ENCODE measurements at regions of chr9 and their contacts with region 1.

Region 1: DNA sequence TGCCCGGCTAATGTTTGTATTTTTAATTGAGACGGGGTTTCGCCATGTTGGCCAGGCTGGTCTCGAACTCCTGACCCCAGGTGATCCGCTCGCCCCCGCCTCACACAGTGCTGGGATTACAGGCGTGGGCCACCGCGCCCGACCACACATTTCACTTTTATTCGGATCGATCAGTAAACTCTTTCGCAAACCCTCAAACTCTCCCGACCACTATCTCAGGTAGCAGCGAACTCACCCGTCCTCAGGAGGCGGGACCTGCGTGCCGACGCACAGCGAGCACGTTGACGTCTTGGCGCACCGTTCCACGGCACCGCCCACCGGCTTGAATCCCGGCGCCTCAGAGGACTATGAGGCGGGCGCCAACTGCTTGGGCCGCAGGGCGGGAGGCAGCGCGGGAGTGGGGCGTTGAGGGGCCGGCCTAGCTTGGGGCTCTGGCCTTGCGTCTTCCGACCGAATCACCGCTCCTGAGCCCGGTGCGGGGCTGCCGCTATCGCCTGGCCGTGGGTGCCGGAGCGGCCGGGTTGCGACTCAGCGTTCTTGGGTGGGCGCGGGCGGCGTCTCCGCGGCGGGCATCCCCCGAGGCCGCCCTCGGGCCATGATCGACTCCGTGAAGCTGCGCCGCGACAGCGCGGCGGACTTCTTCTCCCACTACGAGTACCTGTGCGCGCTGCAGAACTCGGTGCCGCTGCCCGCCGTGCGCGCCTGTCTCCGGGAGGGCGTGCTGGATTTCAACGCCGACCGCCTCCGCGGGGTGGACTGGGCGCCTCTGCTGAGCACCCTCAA is at the start of gene CEP78:
- DNase-seq: peak; percentile 97
- H3K27ac ChIP-seq: peak within 1 kb of the TSS; percentile 84
- CTCF ChIP-seq: no peak

Region 2: DNA sequence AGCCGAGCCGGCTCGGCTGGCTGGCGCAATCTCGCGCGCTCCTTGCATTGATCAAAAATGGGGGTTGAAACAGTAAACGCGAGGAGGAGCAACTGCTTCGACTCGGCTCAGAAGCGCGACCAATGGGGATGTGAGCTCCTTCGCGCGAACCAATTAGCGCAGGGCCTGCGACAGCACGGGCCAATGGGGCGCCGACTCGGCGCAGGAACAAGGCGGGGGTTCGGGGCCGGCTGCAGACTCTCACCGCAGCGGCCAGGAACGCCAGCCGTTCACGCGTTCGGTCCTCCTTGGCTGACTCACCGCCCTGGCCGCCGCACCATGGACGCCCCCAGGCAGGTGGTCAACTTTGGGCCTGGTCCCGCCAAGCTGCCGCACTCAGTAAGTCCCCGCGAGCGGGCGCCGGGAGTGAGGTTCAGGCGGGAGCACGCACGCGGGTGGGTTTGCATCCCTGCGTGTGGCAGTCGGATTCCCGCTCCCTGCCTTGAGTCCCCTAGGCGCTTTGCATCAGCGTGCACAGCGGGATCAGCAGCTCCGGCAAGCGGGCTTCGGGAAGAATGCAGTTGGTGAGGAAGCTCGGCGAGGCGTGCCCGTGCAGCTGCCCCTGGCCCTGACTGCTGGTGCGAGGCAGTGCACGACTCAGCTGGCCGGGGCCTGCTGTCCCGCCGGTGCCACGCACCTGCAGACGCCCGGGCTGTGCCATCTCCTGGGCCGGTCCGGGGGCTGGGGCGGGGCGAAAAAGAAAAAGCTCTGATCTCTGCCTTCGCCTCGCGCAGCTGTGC is 61.1 kb after region 1 on chr9 and contains the start of gene PSAT1:
- CTCF ChIA-PET with region 1: interaction called, 6 read pairs
- POLR2A ChIA-PET with region 1: interaction called, 14 read pairs
- DNase-seq: peak; percentile 100
- H3K27ac ChIP-seq: peak within 1 kb of the TSS; percentile 98
- CTCF ChIP-seq: no peak

Region 3: GRCh38 chr9:78369639-78370219 is 133.8 kb after region 1 on chr9:
- CTCF ChIA-PET with region 1: interaction called, 11 read pairs
- POLR2A ChIA-PET with region 1: no interaction called
- DNase-seq: peak; percentile 70
- H3K27ac ChIP-seq: no peak overlapping the region
- CTCF ChIP-seq: peak; percentile 83